ENCODE measurements at regions of chr10 and their contacts with region 1.

Region 1: DNA sequence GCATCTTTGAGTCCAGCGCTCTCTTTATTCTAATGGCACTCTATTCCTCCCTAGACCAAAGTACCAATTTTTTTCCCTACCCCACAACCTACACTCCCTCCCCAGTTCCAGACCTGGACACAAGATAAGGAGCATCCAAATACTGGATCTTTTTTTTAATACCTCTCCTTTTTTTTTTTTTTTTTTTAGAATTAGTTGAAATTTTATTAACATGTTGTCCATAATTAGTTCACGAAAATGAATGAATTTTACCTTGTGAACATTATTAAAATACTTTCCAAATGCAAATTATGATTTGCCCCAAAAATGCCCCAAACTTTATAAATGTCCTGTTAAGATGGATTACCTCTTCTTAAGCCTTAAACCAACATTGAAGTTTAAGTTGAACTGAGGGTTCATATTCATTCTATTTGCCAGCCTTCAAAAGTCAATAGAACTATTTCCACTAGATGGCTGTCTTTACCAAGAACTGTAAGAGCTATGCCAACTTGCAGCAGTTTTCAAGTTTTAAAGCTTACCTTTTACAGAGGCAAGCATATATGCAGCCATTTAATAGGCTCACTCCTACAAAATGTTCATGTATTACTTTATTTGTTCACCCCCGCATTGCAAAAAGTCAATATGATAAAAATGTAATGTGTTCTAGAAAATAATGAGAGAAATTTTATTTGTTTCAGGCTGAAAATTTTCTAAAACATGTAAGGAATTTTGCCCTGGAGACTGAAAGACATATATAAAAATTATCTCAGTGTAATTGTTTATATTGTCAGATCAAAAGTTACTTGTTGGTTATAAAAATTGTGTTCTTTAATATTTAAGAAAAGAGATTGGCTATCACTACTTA is 39.7 kb upstream of the TNKS2 start:
- DNase-seq: no peak
- H3K4me3 ChIP-seq: no peak overlapping the region
- H3K27ac ChIP-seq: no peak overlapping the region
- H3K4me1 ChIP-seq: no peaks in the 10 kb centered on the region
- H3K27me3 ChIP-seq: no peaks in the 10 kb centered on the region
- CTCF ChIP-seq: peak; percentile 38 to 48 (median 44)
- EP300 ChIP-seq: no peak
- POLR2A ChIP-seq: no peak

Region 2: GRCh38 chr10:91919651-91920050 is 161.1 kb after region 1 on chr10:
- in situ Hi-C with region 1: loop called in 1 of 4 experiments (anchors 5 kb)
- intact Hi-C with region 1: no loop called
- DNase-seq: no peak
- H3K4me3 ChIP-seq: no peak overlapping the region
- H3K27ac ChIP-seq: no peak overlapping the region
- H3K4me1 ChIP-seq: peaks cover 0 to 9% (median 6%) of the 10 kb centered on the region in 4 donors
- H3K27me3 ChIP-seq: peaks cover 32% of the 10 kb centered on the region
- CTCF ChIP-seq: no peak
- EP300 ChIP-seq: no peak
- POLR2A ChIP-seq: no peak